GM12878 (cell line): ENCODE measurements at regions of chr11 and their contacts with region 1.

Region 1: GRCh38 chr11:35006389-35007128 is 90.1 kb downstream of the PDHX start:
- DNase-seq: peak; percentile 95
- ATAC-seq: peak; percentile 96
- H3K4me3 ChIP-seq: no peak overlapping the region
- H3K27ac ChIP-seq: peak overlapping the region; percentile 51
- H3K4me1 ChIP-seq: peaks cover 18% of the 10 kb centered on the region
- H3K27me3 ChIP-seq: no peaks in the 10 kb centered on the region
- CTCF ChIP-seq: no peak
- EP300 ChIP-seq: peak; percentile 83 to 94; a peak in 3 of 4 replicates
- POLR2A ChIP-seq: no peak
- RAD21 ChIP-seq: no peak; the same call in 1 of the 2 replicates

Region 2: DNA sequence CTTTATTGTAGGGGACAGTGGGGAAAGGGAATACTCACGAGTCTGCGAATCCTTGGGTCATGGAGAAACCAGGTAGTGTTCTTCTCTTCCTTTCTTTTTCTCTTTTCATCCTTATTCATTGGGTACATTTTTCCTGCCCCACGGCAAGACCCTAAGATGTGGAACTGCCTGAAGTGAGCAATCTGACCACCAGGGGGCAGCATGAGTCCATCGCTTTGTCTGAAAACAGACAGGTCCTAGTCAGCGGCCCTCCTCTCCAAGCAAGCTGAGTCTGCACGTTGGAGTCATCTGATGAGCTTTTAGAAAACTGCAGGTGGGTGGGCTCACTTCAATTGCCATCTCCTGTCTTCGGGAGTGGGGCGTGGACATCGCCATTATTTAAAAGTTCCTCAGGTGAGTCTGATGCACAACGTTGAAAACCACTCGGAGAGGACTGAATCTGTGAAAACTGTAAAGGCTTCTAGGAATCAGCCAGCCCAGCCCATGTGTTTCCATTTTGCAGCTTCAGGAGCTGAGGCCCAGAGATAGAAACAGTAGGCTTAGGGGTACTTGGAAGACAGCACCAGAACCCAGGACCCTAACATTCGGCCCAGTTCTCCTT is 1198.2 kb before region 1 on chr11:
- CTCF ChIA-PET with region 1: no interaction called
- POLR2A ChIA-PET with region 1: no interaction called
- RAD21 ChIA-PET with region 1: no interaction called
- SMC1A ChIA-PET with region 1: no interaction called
- in situ Hi-C with region 1: no loop called
- intact Hi-C with region 1: no loop called
- DNase-seq: peak; percentile 37
- ATAC-seq: peak; percentile 99
- H3K4me3 ChIP-seq: no peak overlapping the region
- H3K27ac ChIP-seq: no peak overlapping the region
- H3K4me1 ChIP-seq: no peaks in the 10 kb centered on the region
- H3K27me3 ChIP-seq: peaks cover 0 to 2% of the 10 kb centered on the region in 2 experiments; a peak in 2 of 4 replicates
- CTCF ChIP-seq: peak; percentile 82 to 92 (median 83)
- EP300 ChIP-seq: no peak
- POLR2A ChIP-seq: no peak
- RAD21 ChIP-seq: peak; percentile 78

Region 3: GRCh38 chr11:34161812-34162499 is 844.6 kb before region 1 on chr11:
- CTCF ChIA-PET with region 1: no interaction called
- POLR2A ChIA-PET with region 1: no interaction called
- RAD21 ChIA-PET with region 1: no interaction called
- SMC1A ChIA-PET with region 1: no interaction called
- in situ Hi-C with region 1: no loop called
- intact Hi-C with region 1: no loop called
- DNase-seq: no peak
- ATAC-seq: peak; percentile 77
- H3K4me3 ChIP-seq: no peak overlapping the region
- H3K27ac ChIP-seq: no peak overlapping the region
- H3K4me1 ChIP-seq: no peaks in the 10 kb centered on the region
- H3K27me3 ChIP-seq: no peaks in the 10 kb centered on the region
- CTCF ChIP-seq: no peak
- EP300 ChIP-seq: peak in 1 of 2 experiments; percentile 56; a peak in 2 of 4 replicates
- POLR2A ChIP-seq: no peak
- RAD21 ChIP-seq: no peak

Region 4: GRCh38 chr11:34860034-34860433 is 146.5 kb before region 1 on chr11:
- CTCF ChIA-PET with region 1: no interaction called
- POLR2A ChIA-PET with region 1: no interaction called
- RAD21 ChIA-PET with region 1: no interaction called
- SMC1A ChIA-PET with region 1: no interaction called
- in situ Hi-C with region 1: no loop called
- intact Hi-C with region 1: no loop called
- DNase-seq: no peak
- ATAC-seq: no peak
- H3K4me3 ChIP-seq: no peak overlapping the region
- H3K27ac ChIP-seq: no peak overlapping the region
- H3K4me1 ChIP-seq: no peaks in the 10 kb centered on the region
- H3K27me3 ChIP-seq: no peaks in the 10 kb centered on the region; a peak in 2 of 4 replicates
- CTCF ChIP-seq: no peak
- EP300 ChIP-seq: no peak
- POLR2A ChIP-seq: no peak
- RAD21 ChIP-seq: no peak

Region 5: DNA sequence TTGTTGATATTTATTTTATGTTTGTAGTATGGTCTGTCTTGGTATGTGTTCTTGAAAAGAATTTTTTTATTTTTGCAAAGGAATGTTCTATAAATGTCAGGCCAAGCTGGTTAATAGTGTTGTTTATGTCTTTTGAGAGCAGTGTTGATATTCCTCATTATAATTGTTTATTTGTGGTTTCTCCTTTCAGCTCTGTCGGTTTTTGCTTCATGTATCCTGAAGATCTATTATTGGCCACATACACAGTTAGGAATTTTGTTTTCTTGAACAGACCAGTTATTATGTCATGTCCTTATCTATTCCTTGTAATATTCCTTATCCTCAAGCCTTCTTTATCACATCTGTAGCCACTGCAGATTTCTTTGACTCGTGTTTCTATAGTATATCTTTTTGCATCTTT is 33.7 kb before region 1 on chr11:
- CTCF ChIA-PET with region 1: no interaction called
- POLR2A ChIA-PET with region 1: no interaction called
- RAD21 ChIA-PET with region 1: no interaction called
- SMC1A ChIA-PET with region 1: no interaction called
- in situ Hi-C with region 1: no loop called
- intact Hi-C with region 1: no loop called
- DNase-seq: no peak
- ATAC-seq: no peak
- H3K4me3 ChIP-seq: no peak overlapping the region
- H3K27ac ChIP-seq: no peak overlapping the region
- H3K4me1 ChIP-seq: no peaks in the 10 kb centered on the region
- H3K27me3 ChIP-seq: no peaks in the 10 kb centered on the region
- CTCF ChIP-seq: no peak
- EP300 ChIP-seq: no peak
- POLR2A ChIP-seq: no peak
- RAD21 ChIP-seq: no peak

Region 6: GRCh38 chr11:35040221-35040942 is 33.8 kb after region 1 on chr11:
- CTCF ChIA-PET with region 1: interaction called, 5 read pairs
- POLR2A ChIA-PET with region 1: no interaction called
- RAD21 ChIA-PET with region 1: interaction called, 26 read pairs
- SMC1A ChIA-PET with region 1: interaction called, 33 read pairs
- in situ Hi-C with region 1: no loop called
- intact Hi-C with region 1: no loop called
- DNase-seq: peak; percentile 84
- ATAC-seq: peak; percentile 88
- H3K4me3 ChIP-seq: peak overlapping the region; percentile 6; the same call in 1 of the 2 replicates
- H3K27ac ChIP-seq: peak overlapping the region; percentile 71
- H3K4me1 ChIP-seq: peaks cover 31% of the 10 kb centered on the region
- H3K27me3 ChIP-seq: no peaks in the 10 kb centered on the region
- CTCF ChIP-seq: no peak
- EP300 ChIP-seq: peak; percentile 63 to 93; a peak in 3 of 4 replicates
- POLR2A ChIP-seq: no peak
- RAD21 ChIP-seq: peak; percentile 6; the same call in 1 of the 2 replicates

Region 7: DNA sequence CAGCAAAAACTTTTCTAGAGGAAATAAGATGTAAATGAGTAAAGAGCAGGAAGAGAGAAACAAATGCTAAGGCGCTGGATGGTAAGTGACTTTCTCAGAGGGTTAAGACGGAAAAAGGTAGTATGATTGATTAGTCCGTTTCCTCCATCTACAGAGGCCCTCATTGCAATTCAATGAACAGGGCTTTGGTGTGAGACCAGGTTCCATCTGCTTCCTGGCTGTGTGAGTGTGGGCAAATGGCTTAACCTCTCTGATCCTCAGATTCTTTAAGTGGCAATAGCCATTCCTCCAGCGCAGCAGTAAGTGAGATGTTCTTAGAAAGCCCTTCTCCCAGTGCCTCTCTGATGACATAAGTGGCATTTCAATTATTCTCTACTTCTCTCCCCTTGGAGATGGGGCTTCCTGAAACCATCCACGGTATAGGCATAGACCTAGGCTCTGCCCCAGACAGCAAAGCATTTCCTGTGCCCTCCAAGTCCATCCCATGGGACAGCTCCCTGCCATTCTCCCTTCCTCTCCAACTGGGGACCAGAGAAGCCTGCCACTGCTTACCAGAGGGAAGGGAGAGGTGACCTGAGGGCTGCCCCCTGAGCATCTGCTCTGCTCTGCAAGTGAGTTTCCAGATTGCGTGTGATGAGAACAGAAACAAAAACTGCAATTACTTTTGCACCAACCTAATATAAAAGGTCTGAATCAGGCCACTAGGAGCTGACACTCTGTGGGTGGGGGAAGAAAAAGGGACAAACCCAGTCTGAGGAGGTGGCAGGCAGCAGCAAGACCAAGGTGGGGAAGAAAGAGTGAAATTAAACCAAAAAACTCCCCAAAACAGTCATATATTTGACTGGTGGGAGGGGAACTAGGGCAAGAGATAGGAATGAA is 119.7 kb after region 1 on chr11:
- CTCF ChIA-PET with region 1: interaction called, 3 read pairs
- POLR2A ChIA-PET with region 1: no interaction called
- RAD21 ChIA-PET with region 1: interaction called, 12 read pairs
- SMC1A ChIA-PET with region 1: interaction called, 8 read pairs
- in situ Hi-C with region 1: no loop called
- intact Hi-C with region 1: no loop called
- DNase-seq: peak; percentile 88
- ATAC-seq: peak; percentile 84
- H3K4me3 ChIP-seq: peak overlapping the region; percentile 0; the same call in 1 of the 2 replicates
- H3K27ac ChIP-seq: peak overlapping the region; percentile 77
- H3K4me1 ChIP-seq: peaks cover 60% of the 10 kb centered on the region
- H3K27me3 ChIP-seq: no peaks in the 10 kb centered on the region
- CTCF ChIP-seq: peak; percentile 10 to 36 (median 14); a peak in 3 of 6 replicates
- EP300 ChIP-seq: peak; percentile 71 to 87
- POLR2A ChIP-seq: peak; percentile 63
- RAD21 ChIP-seq: peak; percentile 54

Region 8: DNA sequence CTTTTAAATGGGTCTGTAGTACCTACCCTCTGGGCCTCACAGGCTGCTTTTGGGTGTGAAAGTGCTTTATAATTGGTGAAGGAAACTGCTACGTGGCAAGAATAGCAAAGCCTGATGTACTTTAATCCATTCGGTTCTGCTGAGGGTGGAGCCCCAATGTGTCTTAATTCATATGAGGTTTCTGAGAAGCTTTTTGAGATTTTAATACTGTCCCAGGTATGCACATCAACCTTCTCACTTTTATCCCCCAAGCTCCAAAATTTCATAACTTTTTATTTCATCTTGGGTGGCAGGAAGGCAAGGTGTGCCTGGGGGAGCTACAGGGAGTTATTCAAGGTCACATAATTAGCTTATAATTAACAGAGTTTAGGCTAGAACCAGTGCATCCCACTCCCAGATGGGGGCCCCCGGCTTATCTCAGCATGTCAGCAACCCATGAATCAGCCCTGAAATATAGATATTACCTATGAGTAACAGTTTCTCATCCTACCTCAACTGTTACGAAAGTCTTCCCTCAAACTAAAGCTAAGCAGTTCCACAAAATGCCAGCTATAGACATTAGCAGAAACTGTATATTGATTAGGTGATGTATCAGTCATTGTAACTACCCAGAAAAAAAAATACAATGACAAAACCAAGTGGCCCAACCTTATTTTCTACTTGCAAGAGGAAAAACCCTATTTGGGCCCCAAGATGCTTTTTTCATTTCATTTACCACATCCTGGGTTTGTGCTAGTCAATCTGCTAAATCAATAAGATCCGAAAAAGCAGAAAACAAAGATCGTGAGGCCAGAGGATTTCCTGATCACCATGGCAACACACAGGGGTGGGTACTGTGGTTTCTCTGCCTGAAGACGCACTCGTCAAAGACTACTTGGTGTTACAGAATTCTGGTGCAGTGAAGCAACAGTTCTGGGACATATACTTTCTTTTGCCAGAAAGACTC is 159.1 kb after region 1 on chr11:
- CTCF ChIA-PET with region 1: interaction called, 48 read pairs
- POLR2A ChIA-PET with region 1: interaction called, 3 read pairs
- RAD21 ChIA-PET with region 1: interaction called, 20 read pairs
- SMC1A ChIA-PET with region 1: interaction called, 234 read pairs
- in situ Hi-C with region 1: no loop called
- intact Hi-C with region 1: no loop called
- DNase-seq: peak; percentile 99
- ATAC-seq: peak; percentile 85
- H3K4me3 ChIP-seq: peak overlapping the region; percentile 53
- H3K27ac ChIP-seq: peak overlapping the region; percentile 72
- H3K4me1 ChIP-seq: peaks cover 54% of the 10 kb centered on the region
- H3K27me3 ChIP-seq: no peaks in the 10 kb centered on the region
- CTCF ChIP-seq: no peak
- EP300 ChIP-seq: peak; percentile 60 to 86; a peak in 3 of 4 replicates
- POLR2A ChIP-seq: peak; percentile 41; the same call in 1 of the 2 replicates
- RAD21 ChIP-seq: no peak

Region 9: DNA sequence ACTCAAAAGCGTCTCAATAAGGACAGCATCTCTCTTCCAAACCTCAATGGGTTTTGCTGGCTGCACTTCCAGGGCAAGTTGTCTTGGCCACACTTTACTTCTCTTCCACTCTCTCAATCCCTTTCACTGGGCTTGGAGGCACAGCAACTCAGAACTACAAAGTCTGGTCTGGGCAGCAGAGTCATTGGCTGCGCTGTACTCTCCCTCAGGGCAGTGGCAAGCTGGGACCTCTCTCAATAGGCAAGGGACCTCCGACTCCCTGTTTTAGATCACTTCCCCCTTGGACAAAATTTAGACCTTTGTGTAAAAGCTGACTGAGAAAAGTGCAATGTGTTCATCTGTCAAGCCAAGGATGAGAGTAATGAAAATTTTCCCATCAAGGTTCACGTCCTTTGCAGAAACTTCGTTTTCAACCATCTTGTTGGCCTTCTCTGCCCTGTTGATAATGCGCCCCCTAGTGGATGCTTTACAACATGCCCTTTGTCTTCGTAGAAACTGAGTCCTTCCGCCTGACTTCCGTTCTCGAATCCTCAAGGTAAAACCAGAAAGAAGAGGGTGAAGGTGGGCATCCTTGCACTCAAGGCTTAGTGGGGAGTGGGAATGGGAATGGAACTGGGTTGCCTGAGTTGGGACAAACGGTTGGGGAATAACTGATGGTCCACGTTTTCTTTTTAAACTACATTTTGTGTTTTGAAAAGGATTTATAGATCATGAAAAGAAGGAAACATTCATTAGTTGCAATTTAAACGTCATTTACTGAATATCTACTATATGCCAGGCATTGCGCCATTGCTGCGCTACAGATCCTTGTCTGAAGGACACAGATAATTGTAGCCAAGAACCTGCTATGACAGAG is 231.5 kb after region 1 on chr11:
- CTCF ChIA-PET with region 1: interaction called, 93 read pairs
- POLR2A ChIA-PET with region 1: no interaction called
- RAD21 ChIA-PET with region 1: interaction called, 79 read pairs
- SMC1A ChIA-PET with region 1: interaction called, 64 read pairs
- in situ Hi-C with region 1: no loop called
- intact Hi-C with region 1: no loop called
- DNase-seq: peak; percentile 35
- ATAC-seq: peak; percentile 70
- H3K4me3 ChIP-seq: no peak overlapping the region
- H3K27ac ChIP-seq: no peak overlapping the region
- H3K4me1 ChIP-seq: peaks cover 19% of the 10 kb centered on the region
- H3K27me3 ChIP-seq: no peaks in the 10 kb centered on the region
- CTCF ChIP-seq: peak; percentile 73 to 82 (median 82)
- EP300 ChIP-seq: no peak
- POLR2A ChIP-seq: no peak
- RAD21 ChIP-seq: peak; percentile 84